Left cardiac atrium (tissue), 4 donors: ENCODE measurements at regions of chr15 and their contacts with region 1.

Region 1: GRCh38 chr15:91302588-91303439 is 202.8 kb downstream of the SV2B start:
- DNase-seq: peak; percentile 47
- ATAC-seq: peak; percentile 82 to 88

Region 2: DNA sequence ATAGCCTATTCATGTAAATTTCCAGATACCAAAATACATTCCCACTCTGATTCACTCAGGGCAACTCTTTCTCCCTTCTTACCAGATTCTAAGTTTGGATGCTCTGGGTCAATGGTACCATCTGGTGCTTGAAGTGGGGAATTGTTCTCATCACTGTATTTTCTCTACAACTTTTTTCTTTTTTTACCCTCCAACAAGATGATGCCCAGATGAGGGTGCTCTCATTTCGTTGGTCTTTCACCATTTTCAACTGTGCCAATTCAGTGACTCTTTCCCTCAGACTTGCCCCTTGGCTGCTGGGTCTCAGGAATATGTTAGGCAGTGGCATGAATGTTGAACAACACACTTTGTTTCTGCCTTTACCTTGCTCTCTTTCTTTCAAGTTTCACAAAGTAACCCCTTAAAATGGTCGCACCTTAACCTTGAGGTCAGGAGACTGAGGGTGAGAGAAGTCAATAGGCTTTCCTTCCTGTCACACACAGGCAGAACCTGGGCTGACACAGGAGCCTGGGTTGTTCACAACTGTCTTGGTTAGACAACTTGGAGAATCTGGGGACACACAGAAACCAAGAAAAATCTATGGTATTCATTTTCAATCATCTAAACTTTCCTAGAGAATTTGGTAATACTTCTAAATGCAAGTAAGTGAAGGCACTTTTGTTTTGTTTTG is 220.0 kb after region 1 on chr15:
- intact Hi-C with region 1: loop called in 1 of 2 experiments (anchors 5 kb)
- DNase-seq: no peak
- ATAC-seq: peak; percentile 62 to 66

Region 3: GRCh38 chr15:91706322-91707032 is 403.7 kb after region 1 on chr15:
- intact Hi-C with region 1: loop called in 1 of 2 experiments (anchors 5 kb)
- DNase-seq: peak; percentile 85
- ATAC-seq: peak; percentile 82 to 88

Region 4: GRCh38 chr15:91852741-91853510 is 550.1 kb after region 1 on chr15:
- intact Hi-C with region 1: loop called in 1 of 2 experiments (anchors 5 kb)
- DNase-seq: peak; percentile 84
- ATAC-seq: peak; percentile 81 to 87

Region 5: GRCh38 chr15:91942676-91943576 is 640.1 kb after region 1 on chr15:
- intact Hi-C with region 1: loop called in 1 of 2 experiments (anchors 10 kb)
- DNase-seq: peak; percentile 83
- ATAC-seq: peak; percentile 76 to 85

Region 6: GRCh38 chr15:92077353-92078085 is 774.7 kb after region 1 on chr15:
- intact Hi-C with region 1: loop called (anchors 2 to 10 kb)
- DNase-seq: peak; percentile 80
- ATAC-seq: peak; percentile 71 to 72